Natural killer cell (primary cell): ENCODE measurements at regions of chrX and their contacts with region 1.

Region 1: GRCh38 chrX:40647307-40648197 is at the start of gene CXorf38:
- DNase-seq: peak; percentile 91 to 95
- ATAC-seq: peak; percentile 71 to 83 (median 79)
- H3K4me3 ChIP-seq: peak within 1 kb of the TSS; percentile 78
- H3K4me3 Mint-ChIP-seq: peak within 1 kb of the TSS; percentile 96
- H3K27ac ChIP-seq: peak within 1 kb of the TSS; percentile 89
- H3K27ac Mint-ChIP-seq: peak within 1 kb of the TSS; percentile 93 to 96
- H3K4me1 ChIP-seq: peaks cover 36% of the 10 kb centered on the region
- H3K4me1 Mint-ChIP-seq: peaks cover 38 to 42% of the 10 kb centered on the region in 2 donors
- H3K27me3 ChIP-seq: no peaks in the 10 kb centered on the region
- H3K27me3 Mint-ChIP-seq: no peaks in the 10 kb centered on the region
- CTCF ChIP-seq: no peak
- total RNA-seq, gene CXorf38: 27.5 to 46.1 (median 30.9) TPM

Region 2: GRCh38 chrX:40298572-40299479 is 348.7 kb before region 1 on chrX:
- intact Hi-C with region 1: no loop called
- DNase-seq: peak in 1 of 2 donors; percentile 11
- ATAC-seq: no peak
- H3K4me3 ChIP-seq: no peak overlapping the region
- H3K4me3 Mint-ChIP-seq: no peak overlapping the region
- H3K27ac ChIP-seq: no peak overlapping the region
- H3K27ac Mint-ChIP-seq: no peak overlapping the region
- H3K4me1 ChIP-seq: peaks cover 10% of the 10 kb centered on the region
- H3K4me1 Mint-ChIP-seq: peaks cover 0 to 4% of the 10 kb centered on the region in 2 donors
- H3K27me3 ChIP-seq: no peaks in the 10 kb centered on the region
- H3K27me3 Mint-ChIP-seq: peaks cover 6 to 28% of the 10 kb centered on the region in 2 donors
- CTCF ChIP-seq: no peak

Region 3: DNA sequence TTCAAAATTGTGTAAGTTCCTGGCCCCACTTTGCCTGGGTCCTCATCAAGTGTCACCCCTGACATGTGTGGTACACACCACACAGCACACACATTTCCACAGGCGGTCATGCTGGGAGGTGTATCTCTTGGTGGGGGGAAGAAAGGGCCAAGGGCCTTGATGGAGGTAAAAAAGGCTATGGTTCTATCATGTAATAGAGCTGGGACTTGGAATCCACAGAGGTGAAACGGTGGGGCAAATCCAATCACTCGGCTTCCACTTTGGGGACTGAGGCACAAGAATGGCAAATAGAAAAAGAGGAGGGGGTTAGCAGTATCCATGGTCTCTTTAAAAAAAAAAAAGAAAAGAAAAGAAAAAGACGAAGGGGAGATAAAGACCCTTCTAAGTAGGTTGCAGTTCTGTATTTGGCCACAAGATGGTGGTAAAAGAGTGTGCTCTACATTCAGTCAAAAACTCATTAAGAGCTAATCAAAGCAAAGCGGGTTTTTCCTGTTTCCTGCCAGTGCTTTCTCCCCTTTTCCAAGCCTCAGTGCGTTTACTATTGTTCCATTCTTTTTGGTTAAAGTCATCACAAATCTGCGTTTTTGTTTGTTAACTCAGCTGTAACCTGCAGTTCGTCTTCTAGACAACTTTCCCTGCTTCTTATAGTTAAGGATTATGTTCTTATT is 103.8 kb before region 1 on chrX:
- intact Hi-C with region 1: loop called (anchors 2 kb)
- DNase-seq: peak in 1 of 2 donors; percentile 72
- ATAC-seq: peak in 2 of 3 donors; percentile 43 to 57
- H3K4me3 ChIP-seq: no peak overlapping the region
- H3K4me3 Mint-ChIP-seq: no peak overlapping the region
- H3K27ac ChIP-seq: no peak overlapping the region
- H3K27ac Mint-ChIP-seq: no peak overlapping the region
- H3K4me1 ChIP-seq: peaks cover 11% of the 10 kb centered on the region
- H3K4me1 Mint-ChIP-seq: peaks cover 12 to 23% of the 10 kb centered on the region in 2 donors
- H3K27me3 ChIP-seq: no peaks in the 10 kb centered on the region
- H3K27me3 Mint-ChIP-seq: peaks cover 5 to 30% of the 10 kb centered on the region in 2 donors
- CTCF ChIP-seq: peak; percentile 69

Region 4: DNA sequence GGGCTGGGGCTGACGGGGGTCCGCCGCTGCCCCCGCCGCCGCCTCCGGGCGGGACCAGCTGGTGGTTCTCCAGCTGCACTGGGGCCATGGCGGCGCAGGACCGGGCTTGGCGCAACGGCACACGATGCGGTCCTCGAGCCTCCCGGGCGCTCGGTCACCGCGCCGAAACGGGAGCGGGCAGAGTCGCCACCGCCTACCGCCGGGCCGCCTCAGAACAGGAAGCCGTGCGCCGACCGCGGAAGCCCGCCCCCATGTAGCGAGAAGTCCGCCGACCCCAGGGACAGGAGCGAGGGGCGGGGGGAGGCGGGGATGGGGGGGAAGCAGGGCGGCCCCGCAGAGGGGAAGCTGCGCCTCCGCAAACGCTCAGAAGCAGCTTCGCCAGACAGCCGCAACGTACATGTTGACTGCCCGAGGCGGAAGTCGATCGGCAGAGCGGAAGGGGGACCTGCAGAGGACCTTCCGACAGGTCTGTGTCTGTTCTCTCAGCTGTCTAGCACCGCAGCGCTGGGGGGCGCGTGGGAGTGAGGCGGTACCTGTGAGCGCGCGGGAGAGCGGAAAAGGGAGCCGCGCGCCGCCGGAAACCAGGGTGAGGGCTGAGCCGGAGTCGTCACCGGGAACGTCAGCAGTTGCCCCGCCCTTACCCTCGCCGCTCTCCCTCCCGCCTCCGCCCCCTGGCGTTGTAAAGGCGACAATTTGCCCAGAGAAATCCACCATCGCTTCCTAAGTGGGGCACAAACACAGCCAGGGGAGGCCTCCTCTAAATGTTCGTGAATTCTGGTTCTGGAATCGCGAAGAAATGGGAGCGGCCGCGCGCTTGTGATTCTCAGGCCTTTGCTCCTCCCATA is 88.0 kb after region 1 on chrX and contains the start of gene MED14:
- intact Hi-C with region 1: loop called (anchors 1 kb)
- DNase-seq: peak; percentile 80 to 94
- ATAC-seq: peak; percentile 84 to 95 (median 84)
- H3K4me3 ChIP-seq: peak within 1 kb of the TSS; percentile 61
- H3K4me3 Mint-ChIP-seq: peak within 1 kb of the TSS; percentile 98
- H3K27ac ChIP-seq: peak within 1 kb of the TSS; percentile 96
- H3K27ac Mint-ChIP-seq: peak within 1 kb of the TSS; percentile 96 to 98
- H3K4me1 ChIP-seq: peaks cover 14% of the 10 kb centered on the region
- H3K4me1 Mint-ChIP-seq: peaks cover 30 to 40% of the 10 kb centered on the region in 2 donors
- H3K27me3 ChIP-seq: no peaks in the 10 kb centered on the region
- H3K27me3 Mint-ChIP-seq: peaks cover 0 to 13% of the 10 kb centered on the region in 2 donors
- CTCF ChIP-seq: peak; percentile 31
- total RNA-seq, gene MED14: 55.3 to 79.1 (median 66.1) TPM

Region 5: GRCh38 chrX:41084044-41084892 is 436.7 kb after region 1 on chrX:
- intact Hi-C with region 1: loop called (anchors 10 kb)
- DNase-seq: peak; percentile 96 to 97
- ATAC-seq: peak; percentile 69 to 85 (median 70)
- H3K4me3 ChIP-seq: peak overlapping the region; percentile 96
- H3K4me3 Mint-ChIP-seq: peak overlapping the region; percentile 93
- H3K27ac ChIP-seq: peak overlapping the region; percentile 100
- H3K27ac Mint-ChIP-seq: peak overlapping the region; percentile 95 to 97
- H3K4me1 ChIP-seq: peaks cover 5% of the 10 kb centered on the region
- H3K4me1 Mint-ChIP-seq: peaks cover 15 to 44% of the 10 kb centered on the region in 2 donors
- H3K27me3 ChIP-seq: no peaks in the 10 kb centered on the region
- H3K27me3 Mint-ChIP-seq: peaks cover 0 to 13% of the 10 kb centered on the region in 2 donors
- CTCF ChIP-seq: no peak

Region 6: GRCh38 chrX:41333744-41334259 is 686.2 kb after region 1 on chrX and contains the start of gene DDX3X:
- intact Hi-C with region 1: loop called (anchors 5 kb)
- DNase-seq: peak; percentile 80 to 91
- ATAC-seq: peak; percentile 54 to 77 (median 65)
- H3K4me3 ChIP-seq: peak within 1 kb of the TSS; percentile 100
- H3K4me3 Mint-ChIP-seq: peak within 1 kb of the TSS; percentile 100
- H3K27ac ChIP-seq: peak within 1 kb of the TSS; percentile 99
- H3K27ac Mint-ChIP-seq: peak within 1 kb of the TSS; percentile 98 to 100
- H3K4me1 ChIP-seq: peaks cover 23% of the 10 kb centered on the region
- H3K4me1 Mint-ChIP-seq: peaks cover 53 to 79% of the 10 kb centered on the region in 2 donors
- H3K27me3 ChIP-seq: no peaks in the 10 kb centered on the region
- H3K27me3 Mint-ChIP-seq: no peaks in the 10 kb centered on the region
- CTCF ChIP-seq: no peak
- total RNA-seq, gene DDX3X: 695 to 1,297 (median 1,054) TPM